Ascending aorta (tissue), 2 donors: ENCODE measurements at regions of chr18 and their contacts with region 1.

Region 1: DNA sequence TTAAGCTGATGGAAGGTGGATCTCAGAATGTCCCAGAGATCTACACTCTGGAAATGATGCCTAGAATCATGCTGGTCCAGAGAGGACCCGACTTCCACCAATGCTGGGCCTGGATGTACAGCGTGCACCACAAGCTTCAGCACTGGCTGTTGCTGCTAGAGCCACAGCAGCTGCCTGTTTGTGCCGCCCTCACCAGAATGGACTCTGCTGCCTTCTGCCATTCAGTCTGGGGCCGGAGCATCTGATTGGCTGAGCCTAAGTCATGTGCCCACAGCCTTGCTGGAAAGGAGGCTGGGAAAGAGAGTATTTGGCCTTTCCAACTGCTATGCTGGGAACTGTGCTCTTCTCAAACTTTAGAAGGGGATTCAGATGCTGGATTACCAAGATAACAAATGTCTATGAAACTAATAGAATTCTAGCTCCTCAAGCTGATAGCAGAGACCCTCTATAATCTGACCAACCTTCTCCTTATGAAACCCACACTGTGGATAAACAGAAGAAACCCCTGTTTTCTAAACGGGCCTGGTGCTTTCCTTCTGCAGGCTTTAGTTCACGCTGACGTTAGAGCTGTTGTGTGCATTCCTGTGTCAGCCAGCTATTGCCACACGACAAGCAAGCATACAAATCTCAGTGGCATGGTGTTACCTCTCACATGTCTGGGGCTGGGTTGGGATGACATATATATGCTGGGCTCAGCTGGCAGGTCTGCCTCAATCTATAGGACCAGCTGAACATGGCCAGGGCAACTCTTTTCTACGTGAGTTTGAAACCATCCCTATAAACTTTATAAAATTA is 4.1 kb upstream of the LOXHD1 start:
- DNase-seq: no peak
- H3K4me3 ChIP-seq: no peak overlapping the region
- H3K27ac ChIP-seq: no peak overlapping the region
- H3K4me1 ChIP-seq: no peaks in the 10 kb centered on the region
- H3K27me3 ChIP-seq: no peaks in the 10 kb centered on the region
- CTCF ChIP-seq: no peak

Region 2: GRCh38 chr18:46148810-46149209 is 512.3 kb before region 1 on chr18:
- intact Hi-C with region 1: loop called (anchors 1 kb)
- DNase-seq: peak in 1 of 2 donors; percentile 69
- H3K4me3 ChIP-seq: no peak overlapping the region
- H3K27ac ChIP-seq: no peak overlapping the region
- H3K4me1 ChIP-seq: no peaks in the 10 kb centered on the region
- H3K27me3 ChIP-seq: no peaks in the 10 kb centered on the region
- CTCF ChIP-seq: peak; percentile 36 to 63 (median 49)

Region 3: DNA sequence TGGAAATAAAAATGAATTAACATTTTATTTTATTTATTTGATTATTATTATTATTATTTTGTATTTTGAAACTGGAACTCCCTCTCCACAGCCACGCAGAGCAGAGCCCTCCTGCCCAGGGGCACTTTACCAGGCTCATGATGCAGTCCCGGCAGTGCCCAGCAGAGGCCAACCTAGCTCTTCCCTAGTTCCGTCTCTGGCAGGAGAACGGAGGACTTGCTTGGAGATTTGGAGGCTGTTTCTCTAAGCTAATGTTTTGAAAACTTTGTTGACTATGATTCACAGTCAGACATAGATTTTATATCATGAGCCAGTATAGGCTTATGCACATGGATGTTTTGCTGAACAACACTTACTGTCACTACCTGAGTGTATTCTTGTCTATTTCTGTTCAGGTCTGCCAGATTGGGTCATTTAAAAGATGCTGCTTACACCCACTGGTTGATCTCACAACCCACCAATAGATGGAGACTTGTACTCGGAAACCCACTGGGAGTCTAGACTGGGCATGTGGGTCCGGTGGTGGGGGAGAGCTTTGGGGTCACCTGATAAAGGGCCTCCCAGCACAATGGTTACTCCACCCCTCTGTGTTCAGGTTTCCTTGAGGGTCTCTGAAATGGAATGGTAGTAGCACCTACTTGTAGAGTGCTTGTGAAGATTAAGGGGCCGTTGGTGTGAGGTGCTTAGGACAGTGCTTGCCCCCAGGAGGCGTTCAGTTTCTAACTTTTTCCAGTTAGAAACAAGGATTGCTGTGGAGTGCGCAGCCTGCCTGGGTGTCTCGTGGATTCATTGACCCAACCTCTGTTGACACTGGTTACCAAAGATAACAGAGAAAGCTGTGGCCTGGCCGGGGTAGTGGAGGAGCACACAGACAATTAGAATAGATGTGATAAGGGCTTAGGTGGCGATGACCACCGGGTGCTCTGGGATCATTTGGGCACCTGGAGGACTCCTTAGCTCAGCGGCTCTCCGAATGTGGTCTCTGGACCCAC is 379.7 kb before region 1 on chr18:
- intact Hi-C with region 1: loop called (anchors 2 kb)
- DNase-seq: no peak
- H3K4me3 ChIP-seq: no peak overlapping the region
- H3K27ac ChIP-seq: no peak overlapping the region
- H3K4me1 ChIP-seq: no peaks in the 10 kb centered on the region
- H3K27me3 ChIP-seq: no peaks in the 10 kb centered on the region
- CTCF ChIP-seq: peak; percentile 65 to 90 (median 77)

Region 4: GRCh38 chr18:46946656-46947282 is 285.6 kb after region 1 on chr18:
- intact Hi-C with region 1: no loop called
- DNase-seq: peak; percentile 11 to 84
- H3K4me3 ChIP-seq: peak overlapping the region; percentile 72 to 83
- H3K27ac ChIP-seq: no peak overlapping the region
- H3K4me1 ChIP-seq: no peaks in the 10 kb centered on the region
- H3K27me3 ChIP-seq: no peaks in the 10 kb centered on the region
- CTCF ChIP-seq: no peak